CD8-positive, alpha-beta T cell (primary cell): ENCODE measurements at regions of chr2 and their contacts with region 1.

Region 1: GRCh38 chr2:78465707-78466106 is 559.8 kb upstream of the REG3G start:
- DNase-seq: no peak
- ATAC-seq: no peak
- H3K4me3 ChIP-seq: no peak overlapping the region
- H3K4me3 Mint-ChIP-seq: no peak overlapping the region
- H3K27ac ChIP-seq: no peak overlapping the region
- H3K27ac Mint-ChIP-seq: no peak overlapping the region
- H3K4me1 ChIP-seq: no peaks in the 10 kb centered on the region
- H3K4me1 Mint-ChIP-seq: no peaks in the 10 kb centered on the region
- H3K27me3 ChIP-seq: no peaks in the 10 kb centered on the region
- H3K27me3 Mint-ChIP-seq: no peaks in the 10 kb centered on the region
- CTCF ChIP-seq: no peak

Region 2: DNA sequence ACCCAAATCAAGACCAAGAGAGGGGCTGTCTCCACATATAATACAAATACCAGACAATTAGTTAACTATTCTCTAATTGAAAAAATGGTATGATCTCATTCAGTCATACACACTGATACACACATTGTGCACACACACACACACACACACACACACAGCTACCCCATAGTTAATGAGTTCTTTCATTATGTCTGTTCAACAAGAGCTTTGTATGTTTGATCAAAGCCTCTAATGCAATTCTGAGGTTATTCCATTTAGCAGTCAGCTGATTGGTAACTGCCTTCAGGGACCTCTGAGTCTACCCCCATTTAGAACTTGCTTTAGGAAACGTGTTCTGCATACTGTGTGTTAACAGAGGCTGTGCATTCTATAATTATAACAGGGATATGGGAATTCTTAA is 202.1 kb before region 1 on chr2:
- CTCF ChIA-PET with region 1: no interaction called
- POLR2A ChIA-PET with region 1: no interaction called
- intact Hi-C with region 1: no loop called
- DNase-seq: no peak
- ATAC-seq: no peak
- H3K4me3 ChIP-seq: no peak overlapping the region
- H3K4me3 Mint-ChIP-seq: no peak overlapping the region
- H3K27ac ChIP-seq: no peak overlapping the region
- H3K27ac Mint-ChIP-seq: no peak overlapping the region
- H3K4me1 ChIP-seq: no peaks in the 10 kb centered on the region
- H3K4me1 Mint-ChIP-seq: no peaks in the 10 kb centered on the region
- H3K27me3 ChIP-seq: no peaks in the 10 kb centered on the region
- H3K27me3 Mint-ChIP-seq: no peaks in the 10 kb centered on the region
- CTCF ChIP-seq: no peak

Region 3: DNA sequence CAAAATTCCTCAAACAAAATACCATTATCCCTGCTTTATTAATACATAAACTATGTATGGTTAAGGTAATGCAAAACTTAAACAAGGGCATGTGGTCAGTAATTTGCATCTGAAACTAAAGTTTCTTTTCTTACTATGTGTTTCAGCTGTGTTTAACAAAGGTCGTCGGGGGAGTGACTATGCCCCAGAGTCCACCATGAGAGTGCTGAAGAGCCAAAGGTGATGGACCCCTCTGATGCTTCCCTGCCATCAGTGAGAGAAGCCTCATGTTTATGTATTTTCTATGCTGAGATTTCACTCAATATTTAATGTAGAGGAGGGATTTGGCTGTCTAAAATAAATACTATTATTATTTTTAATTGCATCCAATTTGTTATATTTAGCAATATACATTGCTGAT is 147.4 kb before region 1 on chr2:
- CTCF ChIA-PET with region 1: no interaction called
- POLR2A ChIA-PET with region 1: no interaction called
- intact Hi-C with region 1: no loop called
- DNase-seq: no peak
- ATAC-seq: no peak
- H3K4me3 ChIP-seq: no peak overlapping the region
- H3K4me3 Mint-ChIP-seq: no peak overlapping the region
- H3K27ac ChIP-seq: no peak overlapping the region
- H3K27ac Mint-ChIP-seq: no peak overlapping the region
- H3K4me1 ChIP-seq: no peaks in the 10 kb centered on the region
- H3K4me1 Mint-ChIP-seq: no peaks in the 10 kb centered on the region
- H3K27me3 ChIP-seq: no peaks in the 10 kb centered on the region
- H3K27me3 Mint-ChIP-seq: no peaks in the 10 kb centered on the region
- CTCF ChIP-seq: no peak

Region 4: GRCh38 chr2:78541451-78542267 is 76.0 kb after region 1 on chr2:
- CTCF ChIA-PET with region 1: no interaction called
- POLR2A ChIA-PET with region 1: no interaction called
- intact Hi-C with region 1: loop called in 1 of 2 experiments (anchors 1 kb)
- DNase-seq: no peak
- ATAC-seq: no peak
- H3K4me3 ChIP-seq: no peak overlapping the region
- H3K4me3 Mint-ChIP-seq: no peak overlapping the region
- H3K27ac ChIP-seq: no peak overlapping the region
- H3K27ac Mint-ChIP-seq: no peak overlapping the region
- H3K4me1 ChIP-seq: no peaks in the 10 kb centered on the region
- H3K4me1 Mint-ChIP-seq: no peaks in the 10 kb centered on the region
- H3K27me3 ChIP-seq: no peaks in the 10 kb centered on the region
- H3K27me3 Mint-ChIP-seq: no peaks in the 10 kb centered on the region
- CTCF ChIP-seq: no peak